GM10248 (cell line): ENCODE measurements at regions of chr6 and their contacts with region 1.

Region 1: GRCh38 chr6:30914076-30914853 is at the start of gene VARS2:
- DNase-seq: peak; percentile 99
- CTCF ChIP-seq: peak; percentile 17

Region 2: GRCh38 chr6:30821862-30822782 is 92.1 kb before region 1 on chr6:
- CTCF ChIA-PET with region 1: interaction called, 65 read pairs
- POLR2A ChIA-PET with region 1: no interaction called
- DNase-seq: peak; percentile 53
- CTCF ChIP-seq: peak; percentile 51

Region 3: DNA sequence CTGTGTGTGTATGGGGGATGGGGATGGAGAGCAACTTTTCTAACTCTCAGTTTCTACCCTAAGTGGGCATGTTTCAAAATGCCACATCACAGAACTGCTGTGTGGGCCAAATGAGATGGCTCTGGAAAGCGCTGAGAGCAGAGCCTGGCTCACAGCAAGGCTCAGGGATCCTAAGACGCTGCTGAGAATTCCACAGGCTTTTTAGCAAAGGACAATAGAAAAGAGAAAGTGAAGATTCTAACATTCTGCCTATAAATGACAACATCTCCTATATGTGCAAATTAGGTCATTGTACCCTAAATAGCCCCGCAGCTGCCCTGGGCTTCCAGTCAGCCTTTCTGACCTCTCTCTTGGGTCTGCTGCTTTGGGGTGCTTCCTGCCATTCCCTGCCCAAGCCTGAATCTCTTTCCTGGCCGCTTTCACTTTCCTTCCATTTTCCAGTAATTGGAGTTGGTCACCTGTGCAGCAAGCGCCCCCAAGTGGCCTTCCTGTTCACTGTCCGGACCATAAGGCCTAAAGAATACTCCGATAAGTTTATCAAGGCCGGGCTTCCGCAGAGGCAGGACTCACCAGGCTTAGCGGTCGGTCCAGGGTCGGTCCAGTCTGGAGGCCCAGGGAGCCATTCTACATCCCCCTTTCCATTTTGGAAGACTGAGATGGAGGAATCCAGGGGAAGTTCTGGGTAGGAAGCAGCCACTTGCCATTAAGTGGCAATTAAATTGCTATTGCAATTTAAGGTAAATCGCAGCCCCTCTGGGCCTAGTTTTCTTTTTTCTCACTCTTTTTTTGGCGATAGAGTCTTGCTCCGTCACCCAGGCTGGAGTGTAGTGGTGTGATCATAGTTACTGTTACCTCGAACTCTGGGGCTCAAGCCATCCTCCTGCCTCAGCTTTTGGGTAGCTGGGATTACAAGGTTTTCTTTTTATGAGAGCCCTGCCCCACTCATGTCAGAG is 36.6 kb before region 1 on chr6:
- CTCF ChIA-PET with region 1: interaction called, 34 read pairs
- POLR2A ChIA-PET with region 1: no interaction called
- DNase-seq: peak; percentile 73
- CTCF ChIP-seq: peak; percentile 82

Region 4: DNA sequence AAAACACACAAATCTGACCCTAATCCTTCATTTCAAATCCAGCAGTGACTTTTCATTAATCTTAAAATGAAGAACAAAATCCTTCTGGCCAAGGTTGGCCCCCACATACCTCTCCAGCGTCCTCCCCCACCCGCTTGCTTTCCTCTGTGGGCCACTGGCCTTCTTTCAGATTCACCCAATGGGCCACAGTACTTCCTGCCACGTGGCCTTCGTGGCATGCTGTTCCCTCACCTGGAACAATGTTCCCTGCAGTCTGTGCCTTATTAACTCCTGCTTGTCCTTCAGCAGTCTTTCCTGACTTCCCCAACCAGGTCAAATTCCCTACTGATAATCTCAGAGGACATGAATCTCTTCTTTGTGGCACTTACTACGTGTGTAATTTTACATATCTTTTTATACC is 11.6 kb before region 1 on chr6:
- CTCF ChIA-PET with region 1: interaction called, 26 read pairs
- POLR2A ChIA-PET with region 1: interaction called, 8 read pairs
- DNase-seq: no peak
- CTCF ChIP-seq: no peak

Region 5: DNA sequence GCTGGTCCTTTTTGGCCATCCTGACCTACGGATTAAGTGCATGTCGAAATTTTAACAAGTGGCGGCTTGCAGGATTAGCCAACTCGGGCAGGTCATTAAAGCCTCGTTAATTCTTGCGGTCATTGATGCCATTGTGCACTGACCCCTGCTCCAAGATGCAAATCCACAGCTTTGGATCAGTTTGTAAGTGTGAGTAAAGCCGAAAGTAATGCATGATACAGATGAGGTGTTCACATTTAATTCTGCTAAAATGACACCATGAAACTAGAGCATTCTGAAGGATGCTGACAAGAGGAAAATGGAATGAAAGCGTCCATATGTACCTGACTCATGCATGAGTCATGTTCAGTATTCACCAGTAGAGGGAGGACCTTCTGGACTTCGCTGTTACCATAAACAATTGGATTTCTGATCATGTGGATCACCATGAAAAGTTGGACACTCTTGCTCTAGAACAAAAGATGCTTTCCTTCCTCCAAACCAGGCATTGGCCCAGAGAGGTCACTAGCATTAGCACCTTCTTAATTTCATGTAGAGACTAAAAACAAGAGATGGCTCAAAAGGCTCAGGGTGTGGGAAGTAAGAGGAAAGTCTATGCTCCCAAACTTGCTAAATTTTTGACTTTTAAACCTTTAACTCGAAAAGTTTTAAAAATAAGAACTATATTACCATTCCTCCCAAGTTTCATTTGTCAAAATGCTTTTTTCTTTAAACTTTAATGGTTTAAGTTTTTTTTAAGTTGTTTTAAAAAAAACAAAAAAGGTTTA is 144.0 kb after region 1 on chr6:
- CTCF ChIA-PET with region 1: interaction called, 27 read pairs
- POLR2A ChIA-PET with region 1: no interaction called
- DNase-seq: no peak
- CTCF ChIP-seq: peak; percentile 31

Region 6: GRCh38 chr6:31087494-31088089 is 173.3 kb after region 1 on chr6:
- CTCF ChIA-PET with region 1: interaction called, 115 read pairs
- POLR2A ChIA-PET with region 1: no interaction called
- DNase-seq: peak; percentile 86
- CTCF ChIP-seq: peak; percentile 83